Activated CD8-positive, alpha-beta T cell treated with anti-CD3 and anti-CD28 coated beads for 36 hours (primary cell): ENCODE measurements at regions of chr12 and their contacts with region 1.

Region 1: DNA sequence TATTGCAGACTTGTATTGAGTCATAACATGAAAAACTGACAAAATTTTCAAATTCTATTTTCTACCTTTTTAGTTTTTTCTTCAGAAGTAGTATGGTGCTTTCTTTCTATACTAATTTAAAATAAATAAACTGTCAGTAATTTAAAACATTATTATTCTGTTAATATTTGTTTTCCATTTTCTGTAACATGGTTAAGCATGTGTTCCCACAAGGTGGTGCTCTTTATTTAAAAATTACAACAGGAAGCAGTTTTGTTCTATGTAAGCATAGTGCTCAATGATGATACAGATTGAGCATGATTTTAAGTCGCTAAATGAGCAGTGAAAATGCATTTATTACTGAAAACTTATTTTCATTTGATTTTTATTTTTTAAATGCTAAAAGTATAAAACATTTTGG is 114.6 kb downstream of the PPFIA2 start:
- DNase-seq: no peak
- ATAC-seq: no peak
- H3K4me3 Mint-ChIP-seq: no peak overlapping the region
- H3K27ac Mint-ChIP-seq: no peak overlapping the region
- H3K4me1 Mint-ChIP-seq: no peaks in the 10 kb centered on the region
- H3K27me3 Mint-ChIP-seq: no peaks in the 10 kb centered on the region
- CTCF ChIP-seq: peak; percentile 46

Region 2: GRCh38 chr12:81502912-81503695 is 141.4 kb before region 1 on chr12:
- CTCF ChIA-PET with region 1: no interaction called
- POLR2A ChIA-PET with region 1: no interaction called
- intact Hi-C with region 1: no loop called
- DNase-seq: no peak
- ATAC-seq: no peak
- H3K4me3 Mint-ChIP-seq: no peak overlapping the region
- H3K27ac Mint-ChIP-seq: no peak overlapping the region
- H3K4me1 Mint-ChIP-seq: no peaks in the 10 kb centered on the region
- H3K27me3 Mint-ChIP-seq: no peaks in the 10 kb centered on the region
- CTCF ChIP-seq: no peak

Region 3: DNA sequence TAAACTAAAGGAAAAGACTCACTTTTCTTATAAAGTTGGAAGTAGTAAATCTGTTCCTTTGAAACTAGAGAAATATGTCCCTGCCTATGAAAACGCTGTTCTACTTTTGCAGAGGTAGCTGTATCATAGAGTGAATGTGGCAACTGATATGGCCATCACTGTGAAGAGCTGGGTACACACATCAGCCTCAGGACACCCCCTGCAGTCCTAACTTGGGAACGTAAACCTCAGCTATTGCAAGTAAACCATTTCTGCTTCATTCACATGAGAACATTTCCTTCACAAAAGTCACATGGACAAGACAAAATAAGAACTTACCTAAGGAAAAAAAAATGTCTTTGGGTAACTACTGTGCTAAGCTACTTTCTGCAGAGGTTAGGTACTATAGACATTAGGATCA is 348.0 kb after region 1 on chr12:
- CTCF ChIA-PET with region 1: interaction called, 6 read pairs
- POLR2A ChIA-PET with region 1: no interaction called
- intact Hi-C with region 1: loop called (anchors 10 kb)
- DNase-seq: peak; percentile 58
- ATAC-seq: peak; percentile 53
- H3K4me3 Mint-ChIP-seq: no peak overlapping the region
- H3K27ac Mint-ChIP-seq: no peak overlapping the region
- H3K4me1 Mint-ChIP-seq: peaks cover 2% of the 10 kb centered on the region
- H3K27me3 Mint-ChIP-seq: no peaks in the 10 kb centered on the region
- CTCF ChIP-seq: peak; percentile 32

Region 4: GRCh38 chr12:82326905-82327503 is 682.5 kb after region 1 on chr12:
- CTCF ChIA-PET with region 1: no interaction called
- POLR2A ChIA-PET with region 1: no interaction called
- intact Hi-C with region 1: loop called (anchors 10 kb)
- DNase-seq: no peak
- ATAC-seq: peak; percentile 34
- H3K4me3 Mint-ChIP-seq: no peak overlapping the region
- H3K27ac Mint-ChIP-seq: no peak overlapping the region
- H3K4me1 Mint-ChIP-seq: no peaks in the 10 kb centered on the region
- H3K27me3 Mint-ChIP-seq: peaks cover 10% of the 10 kb centered on the region
- CTCF ChIP-seq: peak; percentile 59